ENCODE measurements at regions of chr4 and their contacts with region 1.

Region 1: GRCh38 chr4:89294573-89295269 is 12.9 kb downstream of the GPRIN3 start:
- DNase-seq: no peak
- H3K4me3 Mint-ChIP-seq: peak overlapping the region; percentile 49
- H3K27ac Mint-ChIP-seq: peak overlapping the region; percentile 94
- H3K4me1 Mint-ChIP-seq: peaks cover 79% of the 10 kb centered on the region
- H3K27me3 Mint-ChIP-seq: no peaks in the 10 kb centered on the region

Region 2: DNA sequence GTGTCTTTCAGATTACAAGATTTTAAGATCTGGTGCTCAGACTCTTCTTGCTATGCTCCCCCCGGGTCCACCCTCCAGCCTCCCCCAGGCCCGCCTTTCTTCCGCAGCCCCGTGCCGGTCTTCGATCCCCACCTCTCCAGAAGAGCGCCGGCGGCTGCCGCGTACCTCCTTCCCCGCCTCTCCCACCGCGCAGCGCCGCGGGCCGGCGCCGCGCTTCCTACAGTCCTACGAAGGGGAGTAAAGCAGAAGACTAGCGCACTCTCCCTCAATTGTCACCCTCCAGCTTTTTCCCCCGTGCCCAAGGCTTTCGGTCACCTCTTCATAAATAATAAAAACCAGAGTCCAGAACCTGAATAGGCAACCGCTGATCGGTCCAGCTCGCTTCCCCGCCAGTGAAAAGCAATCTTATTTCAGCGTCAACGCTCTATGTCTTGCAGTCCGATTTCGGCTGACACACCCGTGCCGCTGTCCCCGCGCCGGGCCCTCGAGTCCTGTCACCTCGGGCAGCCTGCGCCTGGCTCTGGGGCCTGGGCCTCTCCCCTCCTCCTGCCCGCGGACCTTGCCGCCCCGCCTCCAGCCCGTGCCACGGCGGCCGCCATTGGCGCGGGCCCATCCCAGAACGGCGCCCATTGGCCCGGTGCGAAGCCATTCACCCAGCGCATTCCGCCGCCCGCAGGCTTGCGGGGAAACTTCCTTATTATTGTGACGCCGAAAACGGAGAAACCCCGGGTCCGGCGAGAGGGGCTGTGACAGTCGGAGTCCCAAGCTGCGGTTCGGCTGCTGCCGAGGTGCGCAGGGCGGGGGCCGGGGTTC is 702.7 kb before region 1 on chr4 and contains the start of gene HERC3:
- CTCF ChIA-PET with region 1: no interaction called
- intact Hi-C with region 1: loop called (anchors 5 kb)
- DNase-seq: peak; percentile 90
- H3K4me3 Mint-ChIP-seq: peak within 1 kb of the TSS; percentile 98
- H3K27ac Mint-ChIP-seq: peak within 1 kb of the TSS; percentile 83
- H3K4me1 Mint-ChIP-seq: peaks cover 41% of the 10 kb centered on the region
- H3K27me3 Mint-ChIP-seq: no peaks in the 10 kb centered on the region
- total RNA-seq, gene HERC3: 24.4 to 25.8 TPM

Region 3: DNA sequence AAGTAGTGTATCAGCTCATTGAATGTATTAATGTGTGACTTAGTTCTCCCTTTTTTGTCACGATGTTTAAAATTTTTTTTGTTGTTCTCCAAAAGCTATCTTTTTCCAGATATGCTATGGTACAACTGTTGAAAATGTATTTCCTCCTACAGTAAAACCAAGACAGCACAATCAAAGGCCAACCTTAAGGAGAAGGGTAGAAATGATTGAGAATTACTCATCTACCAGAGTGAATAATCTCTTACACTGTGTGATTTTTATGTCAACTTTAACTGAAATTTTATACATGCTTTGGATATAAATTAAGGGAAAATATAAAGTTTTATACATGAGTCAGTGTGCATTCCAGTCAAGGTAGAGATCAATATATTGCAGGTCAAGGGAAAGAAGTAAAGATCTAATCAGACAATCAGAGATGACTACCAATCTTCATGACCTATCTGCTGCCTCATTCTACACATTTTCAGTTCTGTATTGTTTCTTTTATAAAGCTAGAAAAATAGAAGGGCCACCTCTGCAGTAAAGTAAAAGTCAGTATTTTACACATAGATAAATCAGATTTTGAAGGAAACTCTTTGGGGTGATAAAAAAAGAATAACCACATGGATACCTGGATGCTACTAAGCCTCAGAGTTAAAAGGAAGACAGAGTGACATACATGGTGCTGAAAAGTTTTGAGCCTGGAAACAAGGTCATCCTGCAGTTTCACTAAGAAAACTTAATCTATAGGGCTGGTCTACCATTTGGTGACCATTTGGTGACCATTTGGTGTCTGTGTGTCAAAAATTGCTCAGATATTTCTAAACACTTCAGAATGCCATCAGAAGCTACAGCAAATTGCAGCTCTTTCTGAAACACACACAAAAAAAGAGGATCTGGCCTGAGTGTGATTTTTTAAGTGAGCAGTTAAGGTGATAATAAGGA is 239.3 kb before region 1 on chr4:
- CTCF ChIA-PET with region 1: no interaction called
- intact Hi-C with region 1: loop called (anchors 2 kb)
- DNase-seq: no peak
- H3K4me3 Mint-ChIP-seq: no peak overlapping the region
- H3K27ac Mint-ChIP-seq: no peak overlapping the region
- H3K4me1 Mint-ChIP-seq: peaks cover 32% of the 10 kb centered on the region
- H3K27me3 Mint-ChIP-seq: peaks cover 7% of the 10 kb centered on the region

Region 4: GRCh38 chr4:89172860-89173259 is 121.9 kb before region 1 on chr4:
- CTCF ChIA-PET with region 1: no interaction called
- intact Hi-C with region 1: no loop called
- DNase-seq: no peak
- H3K4me3 Mint-ChIP-seq: no peak overlapping the region
- H3K27ac Mint-ChIP-seq: no peak overlapping the region
- H3K4me1 Mint-ChIP-seq: no peaks in the 10 kb centered on the region
- H3K27me3 Mint-ChIP-seq: peaks cover 4% of the 10 kb centered on the region

Region 5: DNA sequence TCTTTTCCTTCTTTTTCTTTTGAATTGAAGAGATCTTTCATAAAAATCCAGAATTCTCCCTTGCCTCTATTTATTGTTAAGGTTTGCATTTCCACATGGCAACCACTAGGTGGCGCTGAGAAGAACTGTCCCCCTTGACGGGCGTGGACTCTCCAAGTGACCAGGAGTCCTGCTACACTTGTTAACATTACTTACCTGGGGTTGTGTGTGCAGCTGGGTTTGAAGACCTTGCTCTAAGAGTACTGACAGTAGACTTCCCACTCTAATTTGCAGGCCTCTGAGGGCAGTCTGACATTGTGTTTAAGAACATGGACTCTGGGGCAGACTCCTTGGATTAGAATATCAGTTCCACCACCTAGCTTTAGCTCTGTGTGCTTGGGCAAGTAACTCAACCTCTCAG is 39.9 kb before region 1 on chr4:
- CTCF ChIA-PET with region 1: interaction called, 20 read pairs
- intact Hi-C with region 1: loop called (anchors 1 kb)
- DNase-seq: peak; percentile 47
- H3K4me3 Mint-ChIP-seq: no peak overlapping the region
- H3K27ac Mint-ChIP-seq: no peak overlapping the region
- H3K4me1 Mint-ChIP-seq: peaks cover 55% of the 10 kb centered on the region
- H3K27me3 Mint-ChIP-seq: no peaks in the 10 kb centered on the region

Region 6: GRCh38 chr4:89316931-89317366 is 22.2 kb after region 1 on chr4:
- CTCF ChIA-PET with region 1: interaction called, 9 read pairs
- intact Hi-C with region 1: loop called (anchors 1 kb)
- DNase-seq: peak; percentile 31
- H3K4me3 Mint-ChIP-seq: peak overlapping the region; percentile 25
- H3K27ac Mint-ChIP-seq: peak overlapping the region; percentile 74
- H3K4me1 Mint-ChIP-seq: peaks cover 37% of the 10 kb centered on the region
- H3K27me3 Mint-ChIP-seq: no peaks in the 10 kb centered on the region

Region 7: GRCh38 chr4:89829470-89830138 is 534.9 kb after region 1 on chr4:
- CTCF ChIA-PET with region 1: no interaction called
- intact Hi-C with region 1: loop called (anchors 2 kb)
- DNase-seq: peak; percentile 59
- H3K4me3 Mint-ChIP-seq: peak overlapping the region; percentile 19
- H3K27ac Mint-ChIP-seq: peak overlapping the region; percentile 4
- H3K4me1 Mint-ChIP-seq: peaks cover 12% of the 10 kb centered on the region
- H3K27me3 Mint-ChIP-seq: peaks cover 9% of the 10 kb centered on the region